OCI-LY7 (cell line): ENCODE measurements at regions of chr12 and their contacts with region 1.

Region 1: DNA sequence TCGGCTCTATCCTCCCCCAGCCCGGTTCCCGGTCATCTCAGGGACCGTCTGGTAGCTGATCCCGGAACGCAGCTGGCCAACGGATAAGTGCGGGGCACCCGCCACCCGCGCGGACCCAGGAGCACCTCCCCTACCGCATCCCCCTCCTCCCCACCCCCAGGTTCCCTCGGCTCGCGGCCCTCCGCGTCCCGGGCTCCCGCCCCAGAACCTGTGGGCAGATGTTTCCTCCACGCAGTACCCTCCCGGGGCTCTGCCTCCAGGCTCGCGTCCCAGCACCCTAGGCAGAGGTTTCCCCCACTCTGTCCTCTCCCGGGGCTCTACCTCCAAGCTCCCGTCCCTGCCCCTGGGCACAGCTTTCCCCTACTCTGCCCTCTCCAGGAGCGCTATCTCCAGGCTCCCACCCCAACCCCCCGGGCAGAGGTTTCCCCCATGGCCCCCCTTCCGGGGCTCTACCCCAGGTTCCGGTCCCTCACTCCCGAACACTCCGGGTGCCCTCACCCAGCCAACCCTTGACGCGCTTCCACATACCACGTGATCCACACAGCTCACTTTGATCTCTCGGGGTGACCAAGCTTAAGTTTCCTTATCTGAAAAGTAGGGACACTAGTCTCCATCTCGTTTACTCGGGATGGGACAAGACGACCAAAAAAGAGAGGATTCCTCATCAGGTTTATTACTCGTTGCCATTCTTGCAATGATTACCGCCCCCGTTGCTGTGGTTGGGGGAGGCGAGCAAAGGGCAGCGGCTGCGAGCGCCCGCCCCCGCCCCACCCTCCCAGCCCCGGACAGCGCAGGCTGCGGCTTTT is at the start of gene CCDC38:
- DNase-seq: peak; percentile 91
- H3K4me3 ChIP-seq: peak within 1 kb of the TSS; percentile 81
- H3K27ac ChIP-seq: peak within 1 kb of the TSS; percentile 31
- H3K4me1 ChIP-seq: peaks cover 6% of the 10 kb centered on the region
- CTCF ChIP-seq: no peak
- total RNA-seq, gene CCDC38: 0.16 and 0.18 TPM in 2 replicates

Region 2: GRCh38 chr12:95858479-95859343 is 84.0 kb before region 1 on chr12 and contains the start of gene SNRPF:
- CTCF ChIA-PET with region 1: no interaction called
- POLR2A ChIA-PET with region 1: no interaction called
- intact Hi-C with region 1: loop called (anchors 2 kb)
- DNase-seq: peak; percentile 96
- H3K4me3 ChIP-seq: peak within 1 kb of the TSS; percentile 98
- H3K27ac ChIP-seq: peak within 1 kb of the TSS; percentile 65
- H3K4me1 ChIP-seq: peaks cover 14% of the 10 kb centered on the region
- CTCF ChIP-seq: 0 out of 2 replicates have a peak, but pooled peaks have one; percentile 27
- total RNA-seq, gene SNRPF: 34.9 and 38.4 TPM in 2 replicates

Region 3: DNA sequence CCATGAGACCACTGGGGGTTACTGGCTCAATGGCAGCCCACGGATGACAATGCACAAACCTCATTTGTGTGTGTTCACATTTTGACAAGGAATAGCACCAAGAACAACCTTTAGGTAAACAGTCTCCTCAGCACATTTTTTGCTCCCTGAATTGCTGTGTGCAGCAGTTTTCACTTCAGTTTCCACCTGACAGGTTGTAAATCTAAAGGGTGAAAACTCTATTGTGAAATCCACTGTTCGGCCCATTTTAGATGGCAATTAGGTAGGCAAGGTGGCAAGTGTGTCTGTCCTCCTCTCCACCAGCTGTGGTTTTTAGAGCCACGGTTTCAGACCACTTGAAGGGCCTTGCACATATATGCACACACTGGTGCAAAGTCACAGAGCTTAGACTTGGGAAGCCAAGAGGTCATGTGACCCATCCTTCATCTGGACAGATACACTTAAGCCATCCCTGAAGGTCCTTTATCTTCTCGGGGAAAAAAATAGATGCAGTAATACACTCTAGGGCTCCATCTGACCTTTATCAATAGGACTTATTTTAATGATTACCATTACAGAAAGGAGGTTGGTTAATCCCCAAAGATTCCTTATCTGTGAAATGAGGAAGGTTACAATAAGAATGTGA is 30.2 kb after region 1 on chr12:
- CTCF ChIA-PET with region 1: no interaction called
- POLR2A ChIA-PET with region 1: interaction called, 17 read pairs
- intact Hi-C with region 1: no loop called
- DNase-seq: no peak
- H3K4me3 ChIP-seq: no peak overlapping the region
- H3K27ac ChIP-seq: no peak overlapping the region
- H3K4me1 ChIP-seq: peaks cover 16% of the 10 kb centered on the region
- CTCF ChIP-seq: no peak

Region 4: GRCh38 chr12:96020314-96021003 is 77.7 kb after region 1 on chr12:
- CTCF ChIA-PET with region 1: no interaction called
- POLR2A ChIA-PET with region 1: interaction called, 14 read pairs
- intact Hi-C with region 1: loop called (anchors 5 kb)
- DNase-seq: peak; percentile 82
- H3K4me3 ChIP-seq: peak overlapping the region; percentile 49
- H3K27ac ChIP-seq: peak overlapping the region; percentile 93
- H3K4me1 ChIP-seq: peaks cover 32% of the 10 kb centered on the region
- CTCF ChIP-seq: no peak